ENCODE measurements at regions of chr1 and their contacts with region 1.

Region 1: GRCh38 chr1:94801919-94802546 is 18.1 kb upstream of the SLC44A3 start:
- DNase-seq: peak; percentile 31 to 89 (median 79)
- H3K4me3 ChIP-seq: peak overlapping the region in 2 of 3 donors; percentile 35 to 58
- H3K27ac ChIP-seq: peak overlapping the region; percentile 56 to 68
- H3K4me1 ChIP-seq: peaks cover 2 to 13% (median 11%) of the 10 kb centered on the region in 3 donors
- H3K27me3 ChIP-seq: no peaks in the 10 kb centered on the region
- CTCF ChIP-seq: peak; percentile 56

Region 2: DNA sequence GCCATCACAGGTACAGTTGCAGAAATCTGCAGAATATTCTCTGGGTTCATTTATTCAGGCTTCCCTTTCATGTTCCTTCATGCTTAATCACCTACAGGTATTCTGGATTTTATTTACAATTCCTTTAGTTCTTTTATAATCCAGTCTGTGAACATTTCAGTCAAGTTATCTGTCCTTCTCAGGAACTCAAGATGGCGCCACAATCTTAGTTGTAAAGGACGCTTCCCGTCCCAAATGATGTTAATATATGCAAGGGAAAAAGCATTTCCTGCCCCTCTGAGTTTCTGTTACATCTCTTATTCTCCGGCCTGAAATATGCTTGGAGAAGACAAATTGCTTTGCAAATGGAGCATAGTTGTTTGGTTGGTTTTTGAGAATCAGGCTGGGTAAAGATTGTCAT is 279.7 kb before region 1 on chr1:
- intact Hi-C with region 1: loop called (anchors 10 kb)
- DNase-seq: peak in 3 of 5 donors; percentile 26 to 87 (median 68)
- H3K4me3 ChIP-seq: no peak overlapping the region
- H3K27ac ChIP-seq: no peak overlapping the region
- H3K4me1 ChIP-seq: peaks cover 0 to under 1% (median 0%) of the 10 kb centered on the region in 3 donors
- H3K27me3 ChIP-seq: no peaks in the 10 kb centered on the region
- CTCF ChIP-seq: peak; percentile 57

Measured in kidney (tissue), 22 donors.